Activated T-helper 1 cell treated with anti-CD3 and anti-CD28 coated beads, Interleukin-12 subunit alpha, Interleukin-12 subunit beta, Interleukin-2, Interleukin-4 antibody, amounts not matched to agents 30 ng/mL and 10 ng/mL and 1 ng/mL, durations not matched to agents 14 hours and 24 hours and 36 hours (primary cell): ENCODE measurements at regions of chr22 and their contacts with region 1.

Region 1: GRCh38 chr22:47582067-47582466 is 819.6 kb downstream of the TBC1D22A start:
- DNase-seq: no peak
- H3K4me3 Mint-ChIP-seq: no peak overlapping the region
- H3K27ac Mint-ChIP-seq: no peak overlapping the region
- H3K4me1 Mint-ChIP-seq: no peaks in the 10 kb centered on the region
- H3K27me3 Mint-ChIP-seq: no peaks in the 10 kb centered on the region

Region 2: DNA sequence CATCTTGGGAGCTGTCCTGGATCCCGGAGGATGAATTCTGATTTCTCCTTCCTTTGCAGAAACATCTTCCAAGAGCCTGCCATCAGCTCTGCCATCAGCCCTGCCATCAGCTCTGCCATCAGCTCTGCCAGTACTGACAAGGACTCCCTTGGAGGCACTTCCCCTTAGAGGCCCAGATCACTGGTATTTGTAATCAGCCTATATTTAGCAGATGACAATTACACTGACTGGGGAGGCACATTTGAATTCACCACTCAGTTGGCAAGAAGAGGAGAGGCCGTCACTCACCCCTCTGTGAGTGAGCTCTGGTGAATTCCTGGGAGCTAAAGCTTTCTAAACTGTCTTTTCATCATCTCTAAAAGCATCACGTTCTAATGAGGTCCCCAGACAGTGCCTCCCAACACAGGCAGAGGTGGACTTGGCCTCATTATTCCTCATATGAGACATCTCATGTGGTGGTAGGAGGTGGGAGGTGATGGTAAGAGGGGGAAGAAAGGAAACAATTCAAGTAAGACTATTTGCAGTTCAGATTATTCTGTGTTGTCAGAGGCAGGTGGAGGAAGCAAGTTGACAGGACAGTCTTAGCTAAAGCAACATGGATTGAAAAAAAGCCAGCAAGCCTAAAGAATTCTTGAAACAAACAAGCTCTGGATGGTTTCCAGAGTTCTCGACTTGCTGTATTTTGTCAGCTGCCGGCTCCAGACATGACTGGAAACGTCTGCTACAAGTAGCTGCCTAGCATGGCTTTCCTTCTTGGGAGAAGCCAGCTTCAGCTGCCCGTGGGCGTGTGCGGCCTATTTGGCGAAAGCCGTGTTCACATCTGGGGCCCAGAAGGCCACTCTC is 47.9 kb before region 1 on chr22:
- intact Hi-C with region 1: loop called (anchors 2 kb)
- DNase-seq: no peak
- H3K4me3 Mint-ChIP-seq: no peak overlapping the region
- H3K27ac Mint-ChIP-seq: no peak overlapping the region
- H3K4me1 Mint-ChIP-seq: no peaks in the 10 kb centered on the region
- H3K27me3 Mint-ChIP-seq: peaks cover 2% of the 10 kb centered on the region